ENCODE measurements at regions of chr4 and their contacts with region 1.

Region 1: DNA sequence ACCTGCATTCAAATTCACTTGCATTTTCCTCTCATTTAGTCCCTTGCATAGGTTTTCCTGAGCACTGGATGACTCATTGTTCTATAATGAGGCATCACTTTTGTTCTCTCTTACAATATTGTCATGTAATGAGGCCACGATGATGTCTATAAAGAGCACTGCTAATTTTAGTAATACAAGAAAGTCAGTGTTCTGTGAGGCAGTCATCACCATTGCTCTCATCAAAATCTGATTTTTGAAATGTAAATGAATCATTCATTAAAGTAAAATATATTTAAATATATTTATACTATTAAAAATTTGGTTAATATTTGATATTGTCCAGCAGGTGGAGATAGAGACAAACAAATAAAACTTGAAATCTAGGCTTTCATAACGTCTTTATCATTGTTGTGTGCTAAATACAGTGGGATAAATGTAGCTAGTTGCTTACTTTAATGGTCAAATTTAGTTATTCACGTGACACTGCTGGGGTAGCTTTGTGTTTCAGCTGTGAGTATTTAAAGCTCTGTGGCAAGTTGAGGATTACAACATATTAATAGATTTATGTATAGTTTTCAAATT is 15.4 kb downstream of the HMGB2 start:
- DNase-seq: no peak
- H3K4me3 Mint-ChIP-seq: no peak overlapping the region
- H3K27ac Mint-ChIP-seq: no peak overlapping the region
- H3K4me1 Mint-ChIP-seq: no peaks in the 10 kb centered on the region
- H3K27me3 Mint-ChIP-seq: no peaks in the 10 kb centered on the region

Region 2: DNA sequence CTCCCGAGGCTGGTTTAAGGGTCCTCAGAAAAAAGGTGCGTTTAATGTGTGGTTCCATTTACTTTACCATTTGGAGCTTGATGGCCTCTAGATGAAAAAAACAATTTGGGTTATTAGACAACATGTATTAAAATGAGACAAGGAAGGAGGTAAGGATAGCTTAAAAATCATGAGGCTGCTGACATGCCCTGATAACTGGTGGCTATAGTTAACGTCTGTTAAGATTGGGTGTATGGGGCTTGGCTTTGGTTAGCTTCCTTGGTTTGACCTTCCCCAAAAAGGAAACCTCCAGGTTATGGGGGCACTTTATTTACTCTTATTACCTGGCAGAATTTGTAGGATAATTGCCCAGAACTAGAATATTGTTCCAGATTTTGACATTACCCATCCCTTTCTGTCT is 36.1 kb before region 1 on chr4:
- CTCF ChIA-PET with region 1: no interaction called
- DNase-seq: no peak
- H3K4me3 Mint-ChIP-seq: no peak overlapping the region
- H3K27ac Mint-ChIP-seq: no peak overlapping the region
- H3K4me1 Mint-ChIP-seq: no peaks in the 10 kb centered on the region
- H3K27me3 Mint-ChIP-seq: no peaks in the 10 kb centered on the region

Region 3: DNA sequence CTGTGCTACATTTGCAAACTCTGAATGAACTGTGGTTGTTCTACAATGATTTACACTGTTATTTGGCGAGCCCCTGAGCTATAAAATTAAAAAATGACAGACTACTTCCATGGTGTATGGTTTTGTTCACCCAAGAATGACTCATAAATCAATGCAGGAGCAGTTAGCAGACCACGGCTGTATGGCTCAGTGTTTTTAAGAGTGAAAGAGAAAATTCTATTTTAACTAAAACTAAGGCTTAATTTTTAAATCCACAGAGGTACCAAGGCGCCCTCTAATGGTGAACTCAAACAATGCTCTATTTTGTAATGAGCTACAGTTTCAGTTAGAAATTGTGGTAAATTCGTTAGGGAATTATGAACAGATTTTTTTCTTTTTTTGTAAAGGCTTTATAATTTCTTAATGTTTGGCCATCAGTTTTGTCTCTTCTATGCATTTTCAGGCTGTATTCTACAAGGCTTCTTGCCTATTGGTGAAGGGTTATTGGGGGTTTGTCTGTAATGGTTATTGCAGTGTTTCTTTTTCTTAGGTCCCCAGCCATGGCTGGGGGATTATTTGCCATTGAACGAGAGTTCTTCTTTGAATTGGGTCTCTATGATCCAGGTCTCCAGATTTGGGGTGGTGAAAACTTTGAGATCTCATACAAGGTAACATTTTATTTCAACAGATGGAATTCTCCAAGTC is 17.1 kb before region 1 on chr4:
- CTCF ChIA-PET with region 1: interaction called, 13 read pairs
- DNase-seq: peak; percentile 36
- H3K4me3 Mint-ChIP-seq: no peak overlapping the region
- H3K27ac Mint-ChIP-seq: no peak overlapping the region
- H3K4me1 Mint-ChIP-seq: no peaks in the 10 kb centered on the region
- H3K27me3 Mint-ChIP-seq: no peaks in the 10 kb centered on the region

Region 4: GRCh38 chr4:173334085-173334772 is 15.5 kb after region 1 on chr4 and contains the start of gene HMGB2:
- CTCF ChIA-PET with region 1: interaction called, 16 read pairs
- DNase-seq: peak; percentile 100
- H3K4me3 Mint-ChIP-seq: peak within 1 kb of the TSS; percentile 89
- H3K27ac Mint-ChIP-seq: peak within 1 kb of the TSS; percentile 100
- H3K4me1 Mint-ChIP-seq: peaks cover 45% of the 10 kb centered on the region
- H3K27me3 Mint-ChIP-seq: peaks cover 6% of the 10 kb centered on the region

Region 5: GRCh38 chr4:173370477-173371291 is 52.0 kb after region 1 on chr4 and contains the start of gene SAP30:
- CTCF ChIA-PET with region 1: interaction called, 14 read pairs
- DNase-seq: peak; percentile 98
- H3K4me3 Mint-ChIP-seq: peak within 1 kb of the TSS; percentile 100
- H3K27ac Mint-ChIP-seq: peak within 1 kb of the TSS; percentile 99
- H3K4me1 Mint-ChIP-seq: peaks cover 51% of the 10 kb centered on the region
- H3K27me3 Mint-ChIP-seq: peaks cover 16% of the 10 kb centered on the region

Region 6: DNA sequence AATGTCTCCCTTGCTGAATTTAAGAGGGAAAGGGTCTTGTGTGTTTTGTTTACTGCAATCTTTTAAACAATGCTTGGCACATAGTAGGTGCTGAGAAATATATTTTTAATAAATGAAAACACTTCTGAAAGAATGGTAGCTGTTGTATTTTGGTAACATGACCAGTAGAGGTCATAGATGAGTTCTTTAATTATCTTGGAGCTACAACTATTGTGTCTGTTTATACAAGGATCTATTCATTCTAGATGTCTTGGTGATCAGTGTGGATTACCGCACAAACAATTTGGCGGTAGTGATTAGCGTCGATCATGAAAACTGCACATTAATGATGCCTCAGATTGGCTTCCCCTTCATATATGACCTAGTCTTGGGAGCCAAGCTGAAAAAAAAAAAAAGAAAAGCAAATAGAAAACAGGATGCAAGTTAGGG is 101.6 kb after region 1 on chr4:
- CTCF ChIA-PET with region 1: interaction called, 105 read pairs
- DNase-seq: no peak
- H3K4me3 Mint-ChIP-seq: no peak overlapping the region
- H3K27ac Mint-ChIP-seq: no peak overlapping the region
- H3K4me1 Mint-ChIP-seq: peaks cover 16% of the 10 kb centered on the region
- H3K27me3 Mint-ChIP-seq: peaks cover 13% of the 10 kb centered on the region

Region 7: DNA sequence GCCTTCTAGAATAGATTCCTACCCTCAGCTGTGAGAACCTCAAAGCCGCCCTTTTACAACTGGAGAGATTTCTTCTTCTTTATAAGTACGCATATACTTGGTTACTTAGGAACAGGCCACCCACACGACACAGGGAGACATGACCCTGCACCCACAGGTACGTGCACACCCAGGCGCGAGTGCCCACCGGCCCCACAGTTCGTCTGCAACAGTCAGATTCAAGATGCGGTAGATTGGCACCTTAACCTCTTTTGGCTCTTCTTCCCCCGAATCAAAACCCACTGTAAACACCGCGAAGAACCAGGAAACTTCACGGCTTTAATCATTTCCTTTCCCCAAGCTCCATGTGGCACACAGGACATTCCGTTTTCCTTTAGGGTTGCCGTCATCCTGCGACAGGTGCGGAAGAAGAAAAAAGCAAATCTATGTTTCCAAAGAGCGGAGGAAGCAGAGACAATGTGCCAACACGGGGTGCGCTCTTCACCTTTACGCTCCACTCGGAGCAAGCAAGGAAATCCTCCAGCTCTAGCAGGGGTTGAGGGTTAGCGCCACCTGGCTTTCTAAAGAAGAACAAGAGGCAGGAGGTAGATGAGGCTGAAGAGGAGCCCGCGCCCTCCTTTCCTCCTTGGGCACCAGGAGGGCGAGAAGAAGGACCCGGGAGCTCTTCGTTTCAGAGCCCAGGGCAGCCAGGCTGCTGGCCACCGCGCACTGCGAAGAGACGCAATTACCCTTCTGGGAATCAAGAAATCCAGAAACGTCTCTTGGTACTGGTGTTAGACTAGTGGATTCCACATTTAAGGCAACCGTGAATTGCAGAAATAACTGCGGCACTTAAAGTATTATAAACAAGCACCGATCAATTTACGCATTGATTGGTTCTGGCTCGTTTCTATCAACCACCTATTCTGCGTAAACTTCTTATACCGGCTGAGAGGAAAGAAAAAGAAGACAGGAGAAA is 175.6 kb after region 1 on chr4:
- CTCF ChIA-PET with region 1: interaction called, 10 read pairs
- DNase-seq: peak; percentile 76
- H3K4me3 Mint-ChIP-seq: peak overlapping the region; percentile 67
- H3K27ac Mint-ChIP-seq: no peak overlapping the region
- H3K4me1 Mint-ChIP-seq: peaks cover 31% of the 10 kb centered on the region
- H3K27me3 Mint-ChIP-seq: peaks cover 43% of the 10 kb centered on the region